ENCODE measurements at regions of chr15 and their contacts with region 1.

Region 1: DNA sequence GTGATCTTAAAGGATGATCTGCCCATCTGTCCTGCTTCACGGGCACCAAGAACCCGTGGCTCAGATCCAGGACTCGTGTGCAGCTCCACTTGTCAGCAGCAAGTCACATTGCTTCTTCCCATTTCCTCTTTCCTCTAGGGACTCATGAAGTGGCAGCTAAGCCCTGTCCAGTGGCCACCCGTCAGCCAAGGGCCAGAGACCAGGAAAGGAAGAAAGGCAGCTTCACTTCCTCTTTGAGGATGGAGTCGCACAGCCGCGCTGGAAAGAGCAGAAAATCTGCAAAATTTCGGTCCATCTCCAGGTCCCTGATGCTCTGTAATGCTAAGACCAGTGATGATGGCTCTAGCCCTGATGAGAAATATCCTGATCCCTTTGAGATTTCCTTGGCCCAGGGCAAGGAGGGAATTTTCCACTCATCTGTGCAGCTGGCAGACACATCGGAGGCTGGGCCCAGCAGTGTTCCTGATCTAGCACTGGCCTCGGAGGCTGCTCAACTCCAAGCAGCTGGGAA is 28.5 kb downstream of the IL16 start:
- DNase-seq: peak; percentile 89

Region 2: DNA sequence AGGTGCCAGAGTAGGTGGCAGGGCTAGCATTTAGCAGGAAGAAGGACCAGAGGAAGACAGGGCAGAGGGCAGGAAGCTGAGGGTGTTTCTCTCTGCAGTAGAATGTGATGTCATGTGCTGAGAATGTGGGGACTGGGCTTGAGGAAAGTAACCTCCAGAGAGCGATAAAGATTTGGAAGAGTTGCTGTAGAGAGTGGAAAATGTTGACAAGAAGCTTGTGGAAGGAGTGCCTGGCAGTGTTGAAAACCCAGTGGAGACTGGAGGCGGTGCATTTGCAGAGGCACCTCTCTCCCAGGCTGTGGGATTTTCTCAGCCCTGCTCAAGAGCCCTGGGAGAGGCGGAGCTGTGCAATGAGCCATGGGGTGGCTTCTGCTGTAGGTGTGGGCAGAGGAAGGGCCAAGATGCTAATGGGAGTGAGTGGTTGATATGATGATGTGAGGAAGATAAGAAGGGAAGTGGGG is 290.4 kb before region 1 on chr15:
- intact Hi-C with region 1: no loop called
- DNase-seq: no peak

Region 3: DNA sequence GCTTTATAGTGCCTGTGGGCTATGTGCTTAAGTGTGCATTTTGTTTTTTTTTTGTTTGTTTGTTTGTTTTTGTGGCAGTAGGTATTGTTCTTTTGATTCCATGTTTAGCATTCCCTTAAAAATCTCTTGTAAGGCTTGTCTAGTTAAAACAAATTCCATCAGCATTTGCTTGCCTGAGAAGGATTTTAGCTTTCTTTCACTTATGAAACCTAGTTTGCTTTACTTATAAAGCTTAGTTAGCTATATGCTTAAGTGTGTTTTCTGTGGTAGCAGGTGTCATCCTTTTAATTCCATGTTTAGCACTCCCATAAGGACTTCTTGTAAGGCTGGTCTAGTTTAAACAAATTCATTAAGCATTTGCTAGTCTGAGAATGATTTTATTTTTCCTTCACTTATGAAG is 11.2 kb before region 1 on chr15:
- intact Hi-C with region 1: loop called in 1 of 2 experiments (anchors 1 kb)
- DNase-seq: no peak

Measured in posterior vena cava (tissue), 2 donors.